MCF 10A (cell line): ENCODE measurements at regions of chr11 and their contacts with region 1.

Region 1: DNA sequence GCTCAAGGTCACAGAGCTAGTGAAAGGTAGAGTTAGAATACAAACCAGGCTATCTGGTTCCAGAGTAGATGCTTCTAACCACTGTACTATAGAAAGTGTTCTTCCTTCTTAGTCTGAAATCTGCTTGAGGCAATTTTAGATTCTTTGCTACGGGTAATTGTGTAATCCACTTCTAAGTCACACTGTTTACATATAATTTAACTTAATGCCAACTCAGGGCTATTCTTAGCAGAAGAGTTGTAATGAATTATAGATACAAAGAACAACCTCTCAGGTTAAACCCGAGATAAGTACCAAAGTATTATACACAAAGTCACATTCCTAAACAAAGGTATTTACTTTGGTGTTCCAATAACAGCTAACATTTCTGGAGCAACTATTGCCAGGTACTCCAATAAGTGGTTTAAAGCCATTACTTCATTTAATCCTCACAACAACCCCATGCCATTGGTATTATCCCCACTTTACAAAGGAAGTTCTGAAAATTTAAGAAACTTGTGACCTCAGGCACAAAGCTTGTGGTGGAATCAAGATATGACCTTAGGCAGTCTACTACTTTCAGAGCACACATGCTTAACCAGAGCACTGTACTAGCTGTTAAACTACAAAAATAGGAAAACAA is 31.1 kb upstream of the DDI1 start:
- DNase-seq: peak; percentile 51
- H3K4me3 Mint-ChIP-seq: no peak overlapping the region
- H3K27ac Mint-ChIP-seq: no peak overlapping the region
- H3K4me1 Mint-ChIP-seq: peaks cover 20% of the 10 kb centered on the region
- H3K27me3 Mint-ChIP-seq: no peaks in the 10 kb centered on the region
- CTCF ChIP-seq: no peak

Region 2: DNA sequence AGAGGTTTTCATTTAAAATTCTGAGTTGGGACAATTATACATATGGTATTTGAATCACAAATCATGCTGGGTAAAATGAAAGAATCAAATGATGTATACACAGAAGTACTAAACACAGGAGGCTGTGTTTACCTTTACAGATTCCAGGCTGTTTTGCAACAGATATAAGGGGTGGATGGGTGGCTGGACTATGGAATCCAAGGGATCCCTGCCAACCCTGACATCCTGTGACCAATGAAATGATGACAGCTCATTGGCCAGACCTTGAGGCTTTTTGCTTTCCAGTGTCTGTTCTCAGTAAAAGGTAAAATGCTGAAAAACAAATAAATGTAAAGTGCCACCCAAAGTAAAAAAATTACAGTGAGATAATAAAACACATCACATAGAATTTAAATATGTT is 27.8 kb after region 1 on chr11:
- CTCF ChIA-PET with region 1: interaction called, 3 read pairs
- POLR2A ChIA-PET with region 1: interaction called, 4 read pairs
- intact Hi-C with region 1: loop called (anchors 2 kb)
- DNase-seq: peak; percentile 90
- H3K4me3 Mint-ChIP-seq: peak overlapping the region; percentile 38
- H3K27ac Mint-ChIP-seq: peak overlapping the region; percentile 82
- H3K4me1 Mint-ChIP-seq: peaks cover 16% of the 10 kb centered on the region
- H3K27me3 Mint-ChIP-seq: no peaks in the 10 kb centered on the region
- CTCF ChIP-seq: no peak